Breast epithelium (tissue), 4 donors: ENCODE measurements at regions of chr15 and their contacts with region 1.

Region 1: GRCh38 chr15:85730001-85730820 is 64.5 kb downstream of the KLHL25 start:
- DNase-seq: no peak
- H3K4me3 ChIP-seq: no peak overlapping the region
- H3K27ac ChIP-seq: peak overlapping the region in 1 of 2 donors; percentile 41
- H3K4me1 ChIP-seq: no peaks in the 10 kb centered on the region
- H3K27me3 ChIP-seq: no peaks in the 10 kb centered on the region
- CTCF ChIP-seq: peak in 2 of 3 donors; percentile 79 to 91
- POLR2A ChIP-seq: no peak

Region 2: DNA sequence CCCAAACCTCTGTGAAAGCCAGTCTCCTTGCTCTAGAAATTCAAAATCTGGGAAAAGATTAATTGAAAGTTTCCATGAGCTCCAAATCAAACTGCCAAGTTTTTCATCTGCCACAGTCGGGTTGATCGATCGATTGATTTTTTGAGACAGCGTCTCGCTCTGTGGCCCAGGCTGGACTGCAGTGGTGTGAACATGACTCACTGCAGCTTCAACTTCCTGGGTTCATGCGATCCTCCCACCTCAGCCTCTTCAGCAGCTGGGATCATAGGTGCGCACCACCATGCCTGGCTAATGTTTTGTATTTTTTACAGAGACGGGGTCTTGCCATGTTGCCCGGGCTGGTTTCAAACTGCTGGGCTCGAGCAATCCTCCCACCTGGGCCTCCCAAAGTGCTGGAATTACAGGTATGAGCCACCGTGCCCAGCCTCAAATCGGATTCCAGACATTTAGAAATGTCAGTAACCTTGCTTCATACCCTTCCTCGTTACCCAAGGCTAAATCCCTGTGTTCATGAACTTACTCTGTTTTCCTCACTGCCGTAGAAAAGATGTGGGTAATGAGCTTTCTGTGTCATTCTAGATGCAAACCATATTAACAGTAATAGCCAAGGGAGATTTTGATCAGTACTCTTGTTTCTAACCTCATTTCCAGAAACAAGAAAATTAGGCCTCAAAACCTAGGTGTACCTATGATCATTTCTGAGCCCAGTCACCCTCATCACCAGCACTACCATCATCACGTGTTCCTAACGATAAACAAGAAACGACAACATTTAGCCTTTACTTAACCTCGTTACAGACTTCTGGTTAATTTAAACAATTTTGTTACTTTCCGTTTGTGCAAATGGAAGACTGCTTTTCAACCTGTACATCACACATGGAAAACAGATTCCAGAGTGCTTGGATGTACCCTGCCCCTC is 455.6 kb before region 1 on chr15:
- intact Hi-C with region 1: no loop called
- DNase-seq: no peak
- H3K4me3 ChIP-seq: no peak overlapping the region
- H3K27ac ChIP-seq: no peak overlapping the region
- H3K4me1 ChIP-seq: no peaks in the 10 kb centered on the region
- H3K27me3 ChIP-seq: no peaks in the 10 kb centered on the region
- CTCF ChIP-seq: no peak
- POLR2A ChIP-seq: no peak

Region 3: DNA sequence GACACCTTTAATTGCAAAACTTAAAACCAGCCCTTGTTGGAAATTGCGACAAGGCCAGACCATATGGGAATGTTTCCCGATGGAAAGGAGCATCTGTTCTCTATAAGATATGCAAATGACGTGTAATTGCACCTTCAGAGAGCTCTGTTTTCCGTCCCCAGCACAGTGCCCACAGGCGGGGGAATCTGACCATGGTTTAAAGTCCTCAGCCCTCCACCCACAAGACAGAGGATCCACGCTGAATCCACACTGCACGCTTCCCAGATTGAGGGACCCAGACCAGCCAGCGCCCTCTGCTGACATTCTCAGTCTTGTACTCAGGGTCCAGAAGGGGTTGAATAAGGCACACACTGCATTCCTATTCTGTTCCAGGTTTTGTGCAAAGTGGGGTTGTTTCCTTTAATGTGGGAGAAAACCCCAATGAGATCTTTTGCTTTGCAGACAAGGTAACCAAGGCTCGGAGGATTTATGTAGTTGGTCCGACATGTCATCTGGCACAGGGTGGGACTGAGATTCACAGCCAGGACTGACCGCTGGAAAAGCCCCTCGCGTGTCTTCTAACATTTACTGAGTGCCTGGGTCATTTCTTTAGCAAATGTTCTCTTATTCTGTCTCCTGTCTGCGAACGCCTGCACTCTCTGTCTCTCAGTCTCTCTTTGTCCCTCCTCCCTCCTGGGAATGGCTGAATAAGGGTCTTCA is 101.4 kb after region 1 on chr15:
- intact Hi-C with region 1: loop called (anchors 10 kb)
- DNase-seq: peak; percentile 57 to 60
- H3K4me3 ChIP-seq: no peak overlapping the region
- H3K27ac ChIP-seq: no peak overlapping the region
- H3K4me1 ChIP-seq: no peaks in the 10 kb centered on the region
- H3K27me3 ChIP-seq: no peaks in the 10 kb centered on the region
- CTCF ChIP-seq: peak in 2 of 3 donors; percentile 60 to 70
- POLR2A ChIP-seq: no peak